OCI-LY7 (cell line): ENCODE measurements at regions of chr1 and their contacts with region 1.

Region 1: GRCh38 chr1:26327956-26328362 is 10.2 kb downstream of the CD52 start:
- DNase-seq: peak; percentile 79
- H3K4me3 ChIP-seq: no peak overlapping the region
- H3K27ac ChIP-seq: no peak overlapping the region
- H3K4me1 ChIP-seq: peaks cover 16% of the 10 kb centered on the region
- CTCF ChIP-seq: peak; percentile 66

Region 2: GRCh38 chr1:26265405-26265804 is 62.6 kb before region 1 on chr1:
- CTCF ChIA-PET with region 1: no interaction called
- POLR2A ChIA-PET with region 1: no interaction called
- intact Hi-C with region 1: no loop called
- DNase-seq: no peak
- H3K4me3 ChIP-seq: no peak overlapping the region
- H3K27ac ChIP-seq: no peak overlapping the region
- H3K4me1 ChIP-seq: no peaks in the 10 kb centered on the region
- CTCF ChIP-seq: no peak

Region 3: DNA sequence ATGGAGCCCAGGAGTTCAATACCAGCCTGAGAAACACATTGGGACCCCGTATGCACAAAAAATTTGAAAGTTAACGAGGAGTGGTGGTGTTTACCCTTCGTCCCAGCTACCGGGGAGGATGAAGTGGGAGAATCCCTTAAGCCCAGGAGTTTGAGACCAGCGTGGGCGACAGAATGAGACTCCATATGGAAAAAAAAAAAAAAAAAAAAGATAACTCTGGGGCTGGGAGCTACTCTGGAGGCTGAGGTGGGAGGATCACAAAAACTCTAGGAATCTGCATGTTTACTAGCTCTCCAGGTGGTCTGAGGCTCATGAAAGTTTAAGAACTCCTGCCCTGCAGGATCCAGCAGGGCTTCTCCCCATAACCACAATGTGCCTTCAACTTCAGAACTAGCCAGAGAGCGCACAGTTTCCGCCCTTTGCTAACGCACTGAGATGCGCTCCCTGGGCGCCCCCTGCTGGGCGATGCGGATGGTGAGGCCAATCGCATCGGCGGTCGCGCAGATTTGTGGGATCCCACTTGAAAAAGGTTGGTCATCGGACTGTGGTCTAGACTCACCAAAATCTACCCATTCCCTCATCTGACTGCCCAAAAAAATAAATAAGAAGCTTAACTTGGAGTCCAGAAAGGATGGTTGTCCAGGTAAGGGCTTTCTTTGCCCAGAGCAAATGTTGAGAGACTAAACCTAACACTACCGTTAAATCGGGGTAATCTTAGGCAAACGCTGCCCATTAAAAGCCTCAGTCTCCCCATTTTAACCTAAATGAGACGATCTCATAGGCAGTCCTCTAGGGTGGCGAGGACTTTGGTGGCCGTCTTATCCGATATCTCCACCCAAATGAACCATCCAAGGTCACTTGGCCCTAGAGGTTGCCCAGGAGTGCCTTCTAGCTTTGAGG is 35.8 kb after region 1 on chr1:
- CTCF ChIA-PET with region 1: no interaction called
- POLR2A ChIA-PET with region 1: no interaction called
- intact Hi-C with region 1: loop called (anchors 1 kb)
- DNase-seq: peak; percentile 92
- H3K4me3 ChIP-seq: no peak overlapping the region
- H3K27ac ChIP-seq: no peak overlapping the region
- H3K4me1 ChIP-seq: peaks cover 9% of the 10 kb centered on the region
- CTCF ChIP-seq: peak; percentile 99

Region 4: DNA sequence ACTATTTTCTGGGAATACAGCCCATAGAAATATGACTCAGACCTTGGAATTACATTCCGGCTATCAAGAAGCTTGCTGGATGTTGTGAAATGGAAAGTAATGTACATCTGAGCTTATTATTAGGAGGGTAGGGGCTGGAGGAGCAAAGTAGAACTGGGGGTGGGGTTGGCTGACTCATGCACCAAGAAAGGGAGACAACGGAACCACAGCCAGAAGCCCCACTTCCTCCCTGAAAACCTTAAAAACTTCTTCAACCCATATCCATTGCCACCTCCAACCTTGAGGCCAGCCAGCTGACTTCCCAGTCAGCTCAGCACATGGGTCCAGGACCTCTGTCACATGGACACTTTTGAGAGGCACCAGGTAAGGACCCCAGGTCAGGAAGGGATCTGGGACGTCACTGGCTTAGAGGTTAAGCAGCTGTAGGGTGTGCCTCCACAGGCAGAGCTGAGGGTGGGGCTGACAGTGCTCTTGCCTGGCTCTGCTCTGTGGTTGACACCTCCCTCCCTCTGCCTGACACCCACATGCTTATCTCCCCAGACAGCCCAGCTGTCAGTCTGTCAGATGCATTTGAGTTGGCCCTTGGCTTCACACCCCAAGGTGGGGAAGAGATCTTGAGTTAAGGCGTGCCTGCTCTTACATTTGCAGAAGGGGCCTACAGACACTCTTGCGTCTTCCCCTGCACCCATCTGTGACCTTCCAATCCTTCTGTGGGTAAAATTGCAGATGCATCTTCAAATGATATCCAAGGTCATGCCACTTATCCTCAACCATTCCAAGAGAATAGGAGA is 50.3 kb after region 1 on chr1:
- CTCF ChIA-PET with region 1: no interaction called
- POLR2A ChIA-PET with region 1: no interaction called
- intact Hi-C with region 1: no loop called
- DNase-seq: no peak
- H3K4me3 ChIP-seq: no peak overlapping the region
- H3K27ac ChIP-seq: no peak overlapping the region
- H3K4me1 ChIP-seq: no peaks in the 10 kb centered on the region
- CTCF ChIP-seq: no peak